Activated CD4-positive, alpha-beta memory T cell treated with anti-CD3 and anti-CD28 coated beads for 36 hours (primary cell): ENCODE measurements at regions of chr6 and their contacts with region 1.

Region 1: DNA sequence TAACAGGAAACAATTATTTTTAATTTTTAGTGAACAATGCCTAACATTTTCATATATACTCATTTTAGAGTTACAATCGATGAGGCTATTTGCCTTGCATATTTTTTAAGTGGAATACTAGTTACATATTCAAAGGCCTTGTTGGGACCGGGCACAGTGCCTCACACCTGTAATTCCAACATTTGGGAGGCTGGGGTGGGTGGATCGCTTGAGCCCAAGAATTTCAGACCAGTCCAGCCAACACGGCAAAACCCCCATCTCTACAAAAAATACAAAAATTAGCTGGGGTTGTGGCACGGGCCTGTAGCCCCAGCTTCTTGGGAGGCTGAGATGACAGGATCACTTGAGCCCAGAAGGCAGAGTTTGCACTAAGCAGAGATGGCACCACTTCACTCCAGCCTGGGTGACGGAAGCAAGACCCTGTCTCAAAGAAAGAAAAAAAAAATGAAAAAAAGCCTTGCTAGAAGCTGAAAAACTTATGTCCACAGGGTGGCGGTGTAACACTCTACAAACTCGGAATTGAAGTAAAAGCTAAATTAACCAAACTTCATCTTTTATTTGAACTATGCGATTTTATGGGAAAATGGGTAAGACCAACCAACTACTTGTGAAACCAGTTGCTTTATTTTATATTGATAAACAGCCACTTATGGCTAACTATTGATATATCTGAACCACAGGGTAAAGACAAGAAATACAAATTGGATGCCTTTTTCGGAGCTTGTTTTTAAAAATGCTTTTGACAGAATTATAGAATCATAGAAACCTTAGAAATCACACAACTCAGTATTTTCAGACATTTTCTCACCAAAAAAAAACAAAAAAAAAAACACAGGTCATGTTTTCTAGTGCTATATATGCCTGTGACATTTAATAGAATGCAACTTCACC is 24.1 kb upstream of the ROS1 start:
- DNase-seq: peak; percentile 52
- H3K4me3 Mint-ChIP-seq: no peak overlapping the region
- H3K27ac Mint-ChIP-seq: no peak overlapping the region
- H3K4me1 Mint-ChIP-seq: no peaks in the 10 kb centered on the region
- H3K27me3 Mint-ChIP-seq: peaks cover 23% of the 10 kb centered on the region

Region 2: DNA sequence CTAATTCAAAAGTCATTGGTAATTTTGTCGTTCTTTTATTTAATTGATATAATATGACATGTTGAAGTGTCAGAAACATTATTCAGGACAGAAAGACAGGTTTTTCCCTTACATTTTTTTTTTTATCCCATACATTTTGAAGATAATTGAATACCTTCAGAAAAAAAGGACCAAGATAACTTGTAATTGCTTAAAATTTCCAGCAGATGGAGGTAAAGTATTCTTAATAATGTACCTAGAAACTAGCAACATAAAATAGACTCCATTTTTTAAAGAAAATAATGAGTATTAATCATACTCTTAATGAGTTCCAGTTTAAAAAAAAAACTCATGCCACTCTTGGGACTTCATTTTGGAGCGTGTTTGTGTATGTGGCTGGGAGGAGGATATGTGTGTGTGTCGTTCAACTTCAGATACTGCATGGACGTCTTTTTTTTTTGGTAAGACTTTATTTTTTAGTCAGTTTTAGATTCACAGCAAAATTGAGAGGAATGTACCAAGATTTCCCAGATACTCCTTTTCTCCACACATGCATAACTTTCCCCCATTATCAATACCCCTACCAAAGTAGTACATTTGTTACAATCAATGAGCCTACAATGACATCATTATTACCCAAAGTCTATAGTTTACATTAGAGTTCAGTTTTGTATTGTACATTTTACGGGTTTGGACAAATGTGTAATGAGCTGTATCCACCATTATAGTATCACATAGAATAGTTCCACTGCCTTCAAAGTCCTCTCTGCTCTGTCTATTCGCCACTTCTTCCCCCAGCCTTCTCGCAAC is 103.5 kb before region 1 on chr6:
- CTCF ChIA-PET with region 1: interaction called, 4 read pairs
- POLR2A ChIA-PET with region 1: no interaction called
- intact Hi-C with region 1: loop called (anchors 2 kb)
- DNase-seq: no peak
- H3K4me3 Mint-ChIP-seq: no peak overlapping the region
- H3K27ac Mint-ChIP-seq: no peak overlapping the region
- H3K4me1 Mint-ChIP-seq: no peaks in the 10 kb centered on the region
- H3K27me3 Mint-ChIP-seq: peaks cover 3% of the 10 kb centered on the region

Region 3: DNA sequence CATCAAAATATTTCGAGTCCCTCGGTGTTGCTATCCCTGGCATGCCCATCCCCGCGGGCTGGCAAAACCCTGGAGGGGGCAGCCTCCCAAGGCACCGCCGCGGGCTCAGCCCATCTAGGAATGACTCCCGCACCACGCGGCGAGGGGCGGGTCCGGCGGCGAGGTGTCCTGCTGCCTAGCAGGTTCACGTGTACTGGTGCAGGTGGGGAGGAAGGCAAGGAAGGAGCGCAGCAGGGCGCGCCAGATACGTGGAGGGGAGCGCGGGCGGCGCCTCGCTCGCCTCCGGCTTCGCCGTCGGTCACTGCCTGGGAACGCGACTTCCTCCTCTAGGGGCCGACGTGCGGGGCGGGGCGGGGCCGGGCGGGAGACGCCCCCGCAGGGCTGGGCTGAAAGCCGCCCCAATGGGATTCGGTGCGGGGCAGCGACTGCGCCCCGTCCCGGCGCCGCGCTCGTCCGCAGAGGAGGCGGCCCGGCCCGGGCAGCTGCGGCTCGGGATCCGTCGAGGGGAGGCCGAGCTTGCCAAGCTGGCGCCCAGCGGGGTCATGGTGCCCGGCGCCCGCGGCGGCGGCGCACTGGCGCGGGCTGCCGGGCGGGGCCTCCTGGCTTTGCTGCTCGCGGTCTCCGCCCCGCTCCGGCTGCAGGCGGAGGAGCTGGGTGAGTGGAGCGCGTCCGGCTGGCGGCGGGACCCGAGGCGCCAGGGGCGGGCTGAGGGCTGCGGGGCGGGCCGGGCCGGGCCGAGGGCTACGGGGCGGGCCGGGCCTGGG is 32.6 kb after region 1 on chr6 and contains the start of gene DCBLD1:
- CTCF ChIA-PET with region 1: interaction called, 15 read pairs
- POLR2A ChIA-PET with region 1: no interaction called
- intact Hi-C with region 1: no loop called
- DNase-seq: peak; percentile 74
- H3K4me3 Mint-ChIP-seq: peak within 1 kb of the TSS; percentile 82
- H3K27ac Mint-ChIP-seq: no peak within 1 kb of the TSS
- H3K4me1 Mint-ChIP-seq: peaks cover 12% of the 10 kb centered on the region
- H3K27me3 Mint-ChIP-seq: peaks cover 23% of the 10 kb centered on the region
- total RNA-seq, gene DCBLD1: 4.4 to 4.5 TPM

Region 4: DNA sequence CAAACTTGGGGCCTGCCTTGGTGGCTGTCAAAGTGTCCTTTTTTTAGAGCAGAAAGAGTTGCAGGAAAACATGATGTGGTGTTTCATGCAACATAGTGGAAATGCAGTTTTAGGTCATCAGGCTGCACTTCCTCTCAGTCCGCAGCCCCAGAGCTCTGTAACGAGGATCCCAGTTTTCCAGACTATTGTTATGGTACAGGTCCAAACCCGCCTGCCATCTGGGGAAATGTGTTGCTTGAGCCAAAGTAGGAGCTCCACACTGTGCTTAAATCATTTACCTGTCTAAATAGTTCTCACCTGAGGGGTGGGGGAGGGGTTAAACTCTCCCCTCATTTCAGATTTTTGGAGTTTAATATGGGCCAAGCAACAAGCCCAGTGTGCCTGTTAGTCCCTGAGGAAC is 92.7 kb after region 1 on chr6:
- CTCF ChIA-PET with region 1: interaction called, 12 read pairs
- POLR2A ChIA-PET with region 1: no interaction called
- intact Hi-C with region 1: no loop called
- DNase-seq: no peak
- H3K4me3 Mint-ChIP-seq: no peak overlapping the region
- H3K27ac Mint-ChIP-seq: no peak overlapping the region
- H3K4me1 Mint-ChIP-seq: peaks cover 3% of the 10 kb centered on the region
- H3K27me3 Mint-ChIP-seq: peaks cover 5% of the 10 kb centered on the region

Region 5: GRCh38 chr6:117547688-117548621 is 98.2 kb after region 1 on chr6:
- CTCF ChIA-PET with region 1: interaction called, 50 read pairs
- POLR2A ChIA-PET with region 1: interaction called, 3 read pairs
- intact Hi-C with region 1: no loop called
- DNase-seq: peak; percentile 56
- H3K4me3 Mint-ChIP-seq: peak overlapping the region; percentile 73
- H3K27ac Mint-ChIP-seq: peak overlapping the region; percentile 64
- H3K4me1 Mint-ChIP-seq: peaks cover 33% of the 10 kb centered on the region
- H3K27me3 Mint-ChIP-seq: peaks cover 5% of the 10 kb centered on the region

Region 6: DNA sequence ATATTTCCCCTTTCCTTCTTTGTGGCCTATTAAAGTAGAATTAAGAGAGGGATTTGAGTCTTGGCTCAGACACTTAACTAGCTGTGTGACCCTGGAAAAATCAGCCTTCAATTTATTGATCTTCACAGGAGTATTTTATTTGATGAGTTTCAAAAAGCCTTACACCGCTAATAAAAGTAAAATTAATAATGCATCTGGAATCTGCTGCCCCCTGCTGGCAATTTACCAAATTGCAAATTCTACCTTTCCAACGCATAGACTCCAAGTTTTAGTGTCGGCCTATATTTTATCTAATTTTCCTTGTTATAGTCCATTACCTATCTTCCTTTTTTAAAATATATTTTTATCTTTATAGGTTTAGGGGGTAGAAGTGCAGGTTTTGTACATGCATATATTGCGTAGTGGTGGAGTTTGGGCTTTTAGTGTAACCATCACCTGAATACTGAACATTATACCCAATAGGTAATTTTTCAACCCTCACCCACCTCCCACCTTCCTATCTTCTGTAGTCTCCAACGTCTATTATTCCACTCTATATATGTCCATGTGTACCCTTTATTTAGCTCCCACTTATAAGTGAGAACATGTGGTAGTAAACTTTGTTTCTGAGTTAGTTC is 106.2 kb after region 1 on chr6:
- CTCF ChIA-PET with region 1: interaction called, 130 read pairs
- POLR2A ChIA-PET with region 1: interaction called, 3 read pairs
- intact Hi-C with region 1: loop called (anchors 1 kb)
- DNase-seq: peak; percentile 57
- H3K4me3 Mint-ChIP-seq: no peak overlapping the region
- H3K27ac Mint-ChIP-seq: no peak overlapping the region
- H3K4me1 Mint-ChIP-seq: peaks cover 2% of the 10 kb centered on the region
- H3K27me3 Mint-ChIP-seq: no peaks in the 10 kb centered on the region

Region 7: GRCh38 chr6:117568831-117569410 is 119.1 kb after region 1 on chr6:
- CTCF ChIA-PET with region 1: interaction called, 18 read pairs
- POLR2A ChIA-PET with region 1: no interaction called
- intact Hi-C with region 1: no loop called
- DNase-seq: no peak
- H3K4me3 Mint-ChIP-seq: no peak overlapping the region
- H3K27ac Mint-ChIP-seq: no peak overlapping the region
- H3K4me1 Mint-ChIP-seq: peaks cover 17% of the 10 kb centered on the region
- H3K27me3 Mint-ChIP-seq: no peaks in the 10 kb centered on the region